Lower leg skin (tissue), 4 donors: ENCODE measurements at regions of chr17 and their contacts with region 1.

Region 1: DNA sequence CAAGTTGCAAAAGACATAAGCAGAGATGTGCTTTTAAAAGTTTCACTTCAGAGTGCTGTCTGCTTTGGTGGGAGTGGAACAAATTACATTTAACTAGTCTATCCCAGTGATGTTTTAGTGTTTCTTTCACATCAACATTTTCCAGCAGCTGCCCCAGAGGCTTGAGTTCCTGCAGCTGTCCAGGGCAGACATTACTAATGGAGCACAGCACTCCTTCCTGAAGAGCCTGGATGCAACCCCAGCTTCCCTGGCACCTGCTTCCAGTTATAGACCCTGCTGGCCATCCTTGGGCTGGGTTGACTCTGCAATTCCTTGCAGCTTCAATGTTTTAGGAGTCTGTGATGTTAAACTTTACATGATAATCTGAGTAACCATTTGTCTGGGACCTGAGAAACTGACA is 61.4 kb upstream of the PIRT start:
- DNase-seq: peak in 1 of 2 donors; percentile 68
- H3K4me3 ChIP-seq: no peak overlapping the region
- CTCF ChIP-seq: no peak
- POLR2A ChIP-seq: no peak

Region 2: GRCh38 chr17:10944819-10945218 is 45.5 kb after region 1 on chr17:
- intact Hi-C with region 1: loop called (anchors 10 kb)
- DNase-seq: no peak
- H3K4me3 ChIP-seq: no peak overlapping the region
- CTCF ChIP-seq: no peak
- POLR2A ChIP-seq: no peak